Posterior vena cava (tissue), 2 donors: ENCODE measurements at regions of chr10 and their contacts with region 1.

Region 1: DNA sequence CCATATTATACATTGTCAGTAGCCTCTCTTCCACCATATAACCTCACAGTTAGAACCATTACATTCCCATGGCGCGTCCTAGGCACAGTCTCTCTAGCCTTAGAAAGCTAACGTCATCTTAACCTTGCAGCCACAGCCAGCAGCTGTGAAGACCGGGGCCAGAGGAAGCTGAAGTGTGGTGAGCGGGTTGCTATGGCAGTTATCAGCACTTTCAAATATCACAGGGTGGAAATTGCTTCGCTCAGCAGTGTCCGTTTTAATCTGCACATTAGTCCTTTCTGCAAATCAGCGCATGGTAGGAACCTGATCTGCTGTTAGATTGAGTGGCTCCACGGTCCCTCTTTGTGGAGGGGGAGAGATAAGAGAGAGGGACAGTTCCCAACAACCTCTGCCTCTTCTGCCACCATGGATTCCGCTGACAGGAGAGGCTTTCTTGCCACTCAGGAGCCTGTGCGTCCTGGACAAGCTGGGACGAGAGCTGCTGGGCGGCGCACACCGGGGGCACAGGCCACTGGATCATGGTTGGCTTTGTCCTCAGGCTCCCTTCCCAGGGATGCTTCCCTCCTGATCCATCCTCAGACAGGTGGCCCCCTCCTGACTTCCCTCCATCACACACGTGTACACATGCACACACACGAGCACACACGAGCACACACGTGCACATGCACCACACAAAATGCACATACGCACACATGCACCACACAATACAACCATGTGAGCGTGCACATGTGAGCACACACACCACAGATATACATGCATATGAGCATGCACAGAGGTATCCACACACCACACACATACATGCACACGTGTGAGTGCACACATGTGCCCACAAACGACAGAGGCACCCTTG is 93.8 kb downstream of the WDR37 start:
- DNase-seq: peak; percentile 45

Region 2: GRCh38 chr10:2049560-2049959 is 899.5 kb after region 1 on chr10:
- intact Hi-C with region 1: loop called in 1 of 2 experiments (anchors 10 kb)
- DNase-seq: no peak